Endothelial cell of umbilical vein (primary cell): ENCODE measurements at regions of chr2 and their contacts with region 1.

Region 1: GRCh38 chr2:1721706-1722646 is 22.3 kb downstream of the PXDN start:
- DNase-seq: peak; percentile 91
- H3K4me3 ChIP-seq: peak overlapping the region in 1 of 3 experiments; percentile 51
- H3K27ac ChIP-seq: peak overlapping the region; percentile 98
- H3K4me1 ChIP-seq: peaks cover 34% of the 10 kb centered on the region
- H3K27me3 ChIP-seq: no peaks in the 10 kb centered on the region
- CTCF ChIP-seq: no peak
- POLR2A ChIP-seq: no peak

Region 2: DNA sequence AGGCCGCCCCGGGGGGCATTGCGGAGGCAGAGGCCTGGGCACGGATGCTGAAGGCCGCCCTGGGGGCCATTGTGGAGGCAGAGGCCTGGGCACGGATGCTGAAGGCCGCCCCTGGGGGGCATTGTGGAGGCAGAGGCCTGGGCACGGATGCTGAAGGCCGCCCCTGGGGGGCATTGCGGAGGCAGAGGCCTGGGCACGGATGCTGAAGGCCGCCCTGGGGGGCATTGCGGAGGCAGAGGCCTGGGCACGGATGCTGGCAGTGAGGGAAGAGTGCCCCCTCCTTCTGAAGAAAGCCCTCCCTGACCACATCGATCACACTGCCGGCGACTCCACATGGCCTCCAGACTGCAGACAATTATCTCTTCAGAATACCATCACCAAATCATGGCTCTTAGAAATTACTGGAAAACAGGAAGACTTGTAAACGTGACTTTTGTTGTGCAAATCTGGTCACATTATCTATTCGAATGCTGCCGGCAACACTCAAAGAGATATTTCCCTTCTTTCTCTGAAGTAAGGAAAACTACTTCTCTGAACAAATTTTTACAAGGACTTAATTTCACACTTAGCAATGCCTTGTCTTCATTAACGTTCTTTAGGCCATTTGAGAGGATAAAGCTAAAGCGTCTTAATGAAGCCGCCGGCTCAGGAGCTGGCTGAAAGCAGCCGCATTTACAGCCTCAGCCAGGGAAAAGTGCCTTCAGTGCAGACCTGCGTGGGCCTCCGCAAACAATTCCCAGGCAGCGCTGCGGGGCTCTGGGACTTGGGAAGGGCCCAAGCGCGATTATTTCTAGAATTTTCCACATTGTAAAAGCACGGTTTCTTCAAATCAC is 789.4 kb before region 1 on chr2:
- CTCF ChIA-PET with region 1: no interaction called
- POLR2A ChIA-PET with region 1: no interaction called
- dilution Hi-C with region 1: no loop called
- intact Hi-C with region 1: no loop called
- DNase-seq: no peak
- H3K4me3 ChIP-seq: no peak overlapping the region
- H3K27ac ChIP-seq: no peak overlapping the region
- H3K4me1 ChIP-seq: no peaks in the 10 kb centered on the region
- H3K27me3 ChIP-seq: no peaks in the 10 kb centered on the region
- CTCF ChIP-seq: no peak
- POLR2A ChIP-seq: no peak

Region 3: GRCh38 chr2:1707771-1708418 is 14.1 kb before region 1 on chr2:
- CTCF ChIA-PET with region 1: interaction called, 8 read pairs
- POLR2A ChIA-PET with region 1: interaction called, 14 read pairs
- dilution Hi-C with region 1: no loop called
- intact Hi-C with region 1: loop called (anchors 1 kb)
- DNase-seq: peak; percentile 92
- H3K4me3 ChIP-seq: no peak overlapping the region
- H3K27ac ChIP-seq: peak overlapping the region; percentile 71
- H3K4me1 ChIP-seq: peaks cover 18% of the 10 kb centered on the region
- H3K27me3 ChIP-seq: no peaks in the 10 kb centered on the region
- CTCF ChIP-seq: no peak
- POLR2A ChIP-seq: peak; percentile 20

Region 4: DNA sequence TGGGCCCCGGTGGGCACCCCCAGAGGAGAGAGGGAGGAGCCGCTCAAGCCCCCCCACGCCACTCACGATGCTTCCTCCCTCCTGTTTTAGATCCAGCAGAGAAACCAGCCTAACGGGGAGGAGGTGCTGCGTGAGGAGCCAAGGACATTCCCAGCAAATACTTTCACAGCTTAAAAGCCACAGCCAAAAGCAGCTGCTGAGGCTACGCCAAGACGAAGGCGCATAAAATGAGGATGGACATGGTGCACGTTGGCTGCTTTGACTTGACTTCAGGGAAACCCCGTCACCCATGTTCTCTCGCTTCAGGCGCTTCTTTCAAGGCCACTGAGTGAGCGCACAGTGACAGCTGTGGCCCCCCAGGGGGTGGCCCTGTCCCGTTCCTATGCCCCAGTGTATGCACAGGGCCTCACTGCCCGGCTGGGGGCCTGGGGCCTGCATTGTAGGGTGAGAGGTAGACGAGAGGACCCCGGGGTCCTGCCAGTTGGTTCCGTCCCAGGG is 94.5 kb after region 1 on chr2:
- CTCF ChIA-PET with region 1: no interaction called
- POLR2A ChIA-PET with region 1: no interaction called
- dilution Hi-C with region 1: no loop called
- intact Hi-C with region 1: no loop called
- DNase-seq: no peak
- H3K4me3 ChIP-seq: no peak overlapping the region
- H3K27ac ChIP-seq: no peak overlapping the region
- H3K4me1 ChIP-seq: no peaks in the 10 kb centered on the region
- H3K27me3 ChIP-seq: peaks cover 0 to 2% of the 10 kb centered on the region in 2 experiments
- CTCF ChIP-seq: no peak
- POLR2A ChIP-seq: no peak

Region 5: DNA sequence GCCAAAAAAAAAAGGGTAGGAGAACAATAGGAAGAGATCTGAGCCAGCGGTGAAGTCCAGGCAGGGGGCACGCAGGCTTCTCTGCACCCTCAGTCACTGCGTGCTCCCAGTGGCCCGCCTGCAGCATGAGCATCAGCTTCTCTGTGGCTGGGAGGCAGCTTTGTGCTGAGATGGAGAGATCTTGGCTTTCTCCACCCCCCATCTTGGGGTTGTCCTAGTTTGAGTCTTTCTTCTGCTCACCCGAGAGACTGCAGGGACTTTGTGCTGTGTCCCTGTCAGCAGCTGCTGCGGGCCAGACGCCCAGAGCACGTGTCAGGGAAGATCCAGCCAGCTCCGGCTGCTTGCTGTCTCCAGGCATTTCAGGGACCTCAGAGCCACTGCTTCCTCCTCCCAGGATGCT is 1677.9 kb after region 1 on chr2:
- CTCF ChIA-PET with region 1: no interaction called
- POLR2A ChIA-PET with region 1: no interaction called
- dilution Hi-C with region 1: no loop called
- intact Hi-C with region 1: loop called (anchors 10 kb)
- DNase-seq: no peak
- H3K4me3 ChIP-seq: no peak overlapping the region
- H3K27ac ChIP-seq: no peak overlapping the region
- H3K4me1 ChIP-seq: no peaks in the 10 kb centered on the region
- H3K27me3 ChIP-seq: no peaks in the 10 kb centered on the region
- CTCF ChIP-seq: no peak
- POLR2A ChIP-seq: no peak